Activated CD4-positive, alpha-beta memory T cell treated with anti-CD3 and anti-CD28 coated beads for 36 hours (primary cell): ENCODE measurements at regions of chr1 and their contacts with region 1.

Region 1: GRCh38 chr1:26417111-26417759 is 6.6 kb downstream of the LIN28A start:
- DNase-seq: peak; percentile 89
- H3K4me3 Mint-ChIP-seq: no peak overlapping the region
- H3K27ac Mint-ChIP-seq: no peak overlapping the region
- H3K4me1 Mint-ChIP-seq: peaks cover 2% of the 10 kb centered on the region
- H3K27me3 Mint-ChIP-seq: peaks cover 15% of the 10 kb centered on the region

Region 2: GRCh38 chr1:26035959-26036755 is 381.1 kb before region 1 on chr1:
- CTCF ChIA-PET with region 1: interaction called, 17 read pairs
- POLR2A ChIA-PET with region 1: no interaction called
- intact Hi-C with region 1: no loop called
- DNase-seq: peak; percentile 84
- H3K4me3 Mint-ChIP-seq: peak overlapping the region; percentile 91
- H3K27ac Mint-ChIP-seq: no peak overlapping the region
- H3K4me1 Mint-ChIP-seq: peaks cover 11% of the 10 kb centered on the region
- H3K27me3 Mint-ChIP-seq: peaks cover 5% of the 10 kb centered on the region

Region 3: DNA sequence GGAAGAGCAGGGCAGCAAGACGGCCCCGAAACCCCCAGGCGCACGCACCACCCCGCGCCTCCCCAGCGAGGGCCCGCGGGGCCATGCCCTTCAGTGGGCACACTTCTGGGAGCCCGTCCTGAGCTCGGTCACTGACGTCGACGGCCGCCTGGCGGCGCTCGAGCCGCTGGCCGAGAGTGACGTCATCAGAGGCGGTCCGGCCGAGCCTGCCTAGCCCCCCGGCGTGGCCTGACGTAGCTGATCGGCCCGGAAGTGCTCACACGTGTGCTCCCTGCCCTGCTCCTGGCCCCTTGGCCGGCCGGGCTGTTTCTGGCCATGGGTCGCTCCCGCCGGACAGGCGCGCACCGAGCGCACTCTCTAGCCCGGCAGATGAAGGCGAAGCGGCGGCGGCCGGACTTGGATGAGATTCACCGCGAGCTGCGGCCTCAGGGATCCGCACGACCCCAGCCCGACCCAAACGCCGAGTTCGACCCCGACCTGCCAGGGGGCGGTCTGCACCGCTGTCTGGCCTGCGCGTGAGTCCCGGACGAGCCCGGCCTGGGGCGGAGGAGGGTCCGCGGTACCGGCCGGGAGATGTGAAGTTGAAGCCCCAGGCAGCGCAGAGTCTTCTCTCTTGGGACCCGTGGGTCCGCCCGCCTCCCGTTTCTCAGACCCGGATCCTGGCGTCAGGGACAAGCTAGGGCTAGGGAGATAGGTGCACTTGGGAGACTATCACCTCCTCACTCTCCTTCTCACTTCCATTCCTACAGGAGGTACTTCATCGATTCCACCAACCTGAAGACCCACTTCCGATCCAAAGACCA is 247.4 kb before region 1 on chr1 and contains the start of gene ZNF593:
- CTCF ChIA-PET with region 1: interaction called, 25 read pairs
- POLR2A ChIA-PET with region 1: no interaction called
- intact Hi-C with region 1: no loop called
- DNase-seq: peak; percentile 94
- H3K4me3 Mint-ChIP-seq: peak within 1 kb of the TSS; percentile 83
- H3K27ac Mint-ChIP-seq: peak within 1 kb of the TSS; percentile 72
- H3K4me1 Mint-ChIP-seq: peaks cover 17% of the 10 kb centered on the region
- H3K27me3 Mint-ChIP-seq: no peaks in the 10 kb centered on the region
- total RNA-seq, gene ZNF593: 37.4 to 38.0 TPM

Region 4: GRCh38 chr1:26284597-26285360 is 132.5 kb before region 1 on chr1:
- CTCF ChIA-PET with region 1: interaction called, 30 read pairs
- POLR2A ChIA-PET with region 1: no interaction called
- intact Hi-C with region 1: no loop called
- DNase-seq: peak; percentile 98
- H3K4me3 Mint-ChIP-seq: peak overlapping the region; percentile 68
- H3K27ac Mint-ChIP-seq: peak overlapping the region; percentile 98
- H3K4me1 Mint-ChIP-seq: peaks cover 90% of the 10 kb centered on the region
- H3K27me3 Mint-ChIP-seq: no peaks in the 10 kb centered on the region

Region 5: DNA sequence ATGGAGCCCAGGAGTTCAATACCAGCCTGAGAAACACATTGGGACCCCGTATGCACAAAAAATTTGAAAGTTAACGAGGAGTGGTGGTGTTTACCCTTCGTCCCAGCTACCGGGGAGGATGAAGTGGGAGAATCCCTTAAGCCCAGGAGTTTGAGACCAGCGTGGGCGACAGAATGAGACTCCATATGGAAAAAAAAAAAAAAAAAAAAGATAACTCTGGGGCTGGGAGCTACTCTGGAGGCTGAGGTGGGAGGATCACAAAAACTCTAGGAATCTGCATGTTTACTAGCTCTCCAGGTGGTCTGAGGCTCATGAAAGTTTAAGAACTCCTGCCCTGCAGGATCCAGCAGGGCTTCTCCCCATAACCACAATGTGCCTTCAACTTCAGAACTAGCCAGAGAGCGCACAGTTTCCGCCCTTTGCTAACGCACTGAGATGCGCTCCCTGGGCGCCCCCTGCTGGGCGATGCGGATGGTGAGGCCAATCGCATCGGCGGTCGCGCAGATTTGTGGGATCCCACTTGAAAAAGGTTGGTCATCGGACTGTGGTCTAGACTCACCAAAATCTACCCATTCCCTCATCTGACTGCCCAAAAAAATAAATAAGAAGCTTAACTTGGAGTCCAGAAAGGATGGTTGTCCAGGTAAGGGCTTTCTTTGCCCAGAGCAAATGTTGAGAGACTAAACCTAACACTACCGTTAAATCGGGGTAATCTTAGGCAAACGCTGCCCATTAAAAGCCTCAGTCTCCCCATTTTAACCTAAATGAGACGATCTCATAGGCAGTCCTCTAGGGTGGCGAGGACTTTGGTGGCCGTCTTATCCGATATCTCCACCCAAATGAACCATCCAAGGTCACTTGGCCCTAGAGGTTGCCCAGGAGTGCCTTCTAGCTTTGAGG is 53.4 kb before region 1 on chr1:
- CTCF ChIA-PET with region 1: interaction called, 27 read pairs
- POLR2A ChIA-PET with region 1: interaction called, 3 read pairs
- intact Hi-C with region 1: loop called (anchors 5 kb)
- DNase-seq: peak; percentile 91
- H3K4me3 Mint-ChIP-seq: peak overlapping the region; percentile 8
- H3K27ac Mint-ChIP-seq: peak overlapping the region; percentile 58
- H3K4me1 Mint-ChIP-seq: peaks cover 41% of the 10 kb centered on the region
- H3K27me3 Mint-ChIP-seq: peaks cover 7% of the 10 kb centered on the region

Region 6: DNA sequence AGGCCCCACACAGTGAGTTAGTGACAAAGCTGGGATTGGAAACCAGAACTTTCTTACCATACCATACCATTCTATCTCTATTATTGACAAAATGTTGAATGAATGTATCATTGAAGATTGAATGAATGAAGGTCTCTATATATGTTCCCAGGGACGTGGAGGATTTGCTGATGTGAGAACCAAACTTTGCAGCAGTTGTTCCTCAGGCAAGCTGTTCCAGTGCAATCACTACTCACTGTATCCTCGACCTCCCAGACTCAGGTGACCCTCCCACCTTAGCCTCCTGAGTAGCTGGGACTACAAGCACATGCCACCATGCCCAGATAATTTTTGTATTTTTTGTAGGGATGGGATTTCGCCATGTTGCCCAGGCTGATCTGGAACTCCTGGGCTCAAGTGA is 18.2 kb before region 1 on chr1:
- CTCF ChIA-PET with region 1: interaction called, 25 read pairs
- POLR2A ChIA-PET with region 1: no interaction called
- intact Hi-C with region 1: no loop called
- DNase-seq: no peak
- H3K4me3 Mint-ChIP-seq: no peak overlapping the region
- H3K27ac Mint-ChIP-seq: no peak overlapping the region
- H3K4me1 Mint-ChIP-seq: peaks cover 5% of the 10 kb centered on the region
- H3K27me3 Mint-ChIP-seq: peaks cover 10% of the 10 kb centered on the region